Activated CD4-positive, alpha-beta T cell treated with anti-CD3 and anti-CD28 coated beads for 36 hours (primary cell): ENCODE measurements at regions of chr6 and their contacts with region 1.

Region 1: GRCh38 chr6:26175428-26176181 is 88.4 kb downstream of the HFE start:
- DNase-seq: peak; percentile 69
- ATAC-seq: peak; percentile 14
- H3K4me3 Mint-ChIP-seq: peak overlapping the region; percentile 30
- H3K27ac Mint-ChIP-seq: peak overlapping the region; percentile 80
- H3K4me1 Mint-ChIP-seq: peaks cover 33% of the 10 kb centered on the region
- H3K27me3 Mint-ChIP-seq: no peaks in the 10 kb centered on the region

Region 2: DNA sequence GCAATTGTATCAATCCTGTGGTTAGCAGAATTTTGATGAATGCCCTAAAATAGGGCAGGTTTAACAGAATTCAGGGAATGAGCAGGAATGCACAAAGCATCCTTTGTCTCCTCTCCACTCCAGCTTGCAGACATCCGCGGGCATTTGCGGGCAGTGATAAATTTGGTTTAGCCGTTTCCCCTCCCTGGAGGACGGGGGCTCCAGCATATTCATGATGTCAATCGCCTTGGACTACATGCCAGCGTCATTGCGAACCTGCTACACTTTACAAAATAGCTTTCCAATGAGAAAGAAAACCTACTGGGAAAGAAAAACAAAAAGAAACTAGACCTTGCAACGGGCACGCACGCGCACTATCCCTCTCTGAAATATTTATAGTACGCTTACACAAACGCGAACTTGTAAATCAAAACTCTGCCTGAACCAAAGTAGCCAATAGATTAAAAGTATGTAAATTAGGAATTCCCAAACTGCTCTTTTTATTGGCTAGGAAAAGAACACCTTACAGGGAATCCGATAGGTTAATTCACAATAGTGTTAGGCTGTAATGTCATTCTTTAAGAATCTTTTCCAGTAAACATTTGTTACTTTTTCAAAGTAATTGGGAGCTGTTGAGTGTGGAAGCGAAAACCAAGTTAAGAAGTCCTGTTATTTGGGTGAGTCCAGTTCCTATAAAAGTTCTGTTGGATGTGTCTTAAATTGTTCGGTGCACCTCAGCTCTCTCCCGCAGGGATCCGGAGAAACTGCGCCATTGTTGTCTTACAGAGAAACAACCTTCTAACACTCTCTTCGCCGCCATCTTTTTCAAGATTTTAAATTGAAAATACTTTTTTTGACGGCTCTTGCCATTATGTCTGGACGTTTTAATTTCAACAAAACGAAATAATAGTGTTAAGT is 48.3 kb after region 1 on chr6:
- CTCF ChIA-PET with region 1: interaction called, 3 read pairs
- POLR2A ChIA-PET with region 1: interaction called, 12 read pairs
- intact Hi-C with region 1: no loop called
- DNase-seq: peak; percentile 79
- ATAC-seq: peak; percentile 86
- H3K4me3 Mint-ChIP-seq: no peak overlapping the region
- H3K27ac Mint-ChIP-seq: no peak overlapping the region
- H3K4me1 Mint-ChIP-seq: peaks cover 8% of the 10 kb centered on the region
- H3K27me3 Mint-ChIP-seq: no peaks in the 10 kb centered on the region

Region 3: GRCh38 chr6:26445934-26446667 is 270.5 kb after region 1 on chr6:
- CTCF ChIA-PET with region 1: no interaction called
- POLR2A ChIA-PET with region 1: no interaction called
- intact Hi-C with region 1: loop called in 1 of 2 experiments (anchors 10 kb)
- DNase-seq: peak; percentile 60
- ATAC-seq: peak; percentile 94
- H3K4me3 Mint-ChIP-seq: peak overlapping the region; percentile 7
- H3K27ac Mint-ChIP-seq: peak overlapping the region; percentile 78
- H3K4me1 Mint-ChIP-seq: peaks cover 54% of the 10 kb centered on the region
- H3K27me3 Mint-ChIP-seq: no peaks in the 10 kb centered on the region

Region 4: DNA sequence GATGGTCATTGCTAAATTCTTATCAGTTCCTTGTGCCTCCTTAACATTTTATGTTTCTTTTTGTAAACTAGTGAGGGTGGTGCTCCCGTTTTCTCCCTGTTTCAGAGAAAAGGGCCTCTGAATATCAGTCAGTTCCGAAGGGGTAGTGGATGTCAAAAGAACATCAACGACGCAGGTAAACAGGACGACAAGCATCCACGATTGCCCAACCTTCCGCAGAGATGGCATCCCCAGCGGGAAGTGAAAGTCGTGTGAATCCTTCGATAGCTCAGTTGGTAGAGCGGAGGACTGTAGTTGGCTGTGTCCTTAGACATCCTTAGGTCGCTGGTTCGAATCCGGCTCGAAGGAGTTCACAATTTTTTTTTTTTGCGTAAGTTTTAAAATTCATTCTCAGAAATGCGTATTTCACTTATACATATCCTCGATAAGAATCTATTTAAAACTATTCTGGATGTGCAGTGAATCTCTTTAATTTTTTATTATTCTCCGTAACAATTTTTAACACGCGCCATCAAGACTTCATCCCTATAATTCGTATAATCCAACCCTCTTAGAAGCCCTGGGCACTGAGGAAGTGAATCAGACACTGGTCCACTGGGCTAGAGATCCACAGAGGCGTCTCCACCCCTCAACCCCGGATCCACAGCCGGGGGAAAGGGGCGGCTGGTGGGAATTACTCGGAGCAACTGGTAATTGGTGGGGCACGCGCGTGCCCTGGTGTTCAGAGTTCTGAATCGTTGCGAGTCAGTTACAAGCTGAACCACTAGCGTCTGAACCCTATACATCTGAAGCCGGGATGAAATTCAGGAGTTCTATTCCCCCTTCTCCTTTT is 393.2 kb after region 1 on chr6:
- CTCF ChIA-PET with region 1: interaction called, 4 read pairs
- POLR2A ChIA-PET with region 1: no interaction called
- intact Hi-C with region 1: loop called in 1 of 2 experiments (anchors 2 kb)
- DNase-seq: peak; percentile 97
- ATAC-seq: peak; percentile 74
- H3K4me3 Mint-ChIP-seq: peak overlapping the region; percentile 85
- H3K27ac Mint-ChIP-seq: peak overlapping the region; percentile 81
- H3K4me1 Mint-ChIP-seq: peaks cover 29% of the 10 kb centered on the region
- H3K27me3 Mint-ChIP-seq: peaks cover 2% of the 10 kb centered on the region